Activated CD4-positive, alpha-beta T cell treated with anti-CD3 and anti-CD28 coated beads for 36 hours (primary cell): ENCODE measurements at regions of chrX and their contacts with region 1.

Region 1: GRCh38 chrX:47581731-47582647 is at the start of gene TIMP1:
- DNase-seq: peak; percentile 90
- ATAC-seq: peak; percentile 86
- H3K4me3 Mint-ChIP-seq: peak within 1 kb of the TSS; percentile 46
- H3K27ac Mint-ChIP-seq: peak within 1 kb of the TSS; percentile 81
- H3K4me1 Mint-ChIP-seq: peaks cover 50% of the 10 kb centered on the region
- H3K27me3 Mint-ChIP-seq: peaks cover 3% of the 10 kb centered on the region
- total RNA-seq, gene TIMP1: 40.3 to 48.4 TPM

Region 2: GRCh38 chrX:47169726-47170515 is 412.1 kb before region 1 on chrX:
- CTCF ChIA-PET with region 1: no interaction called
- POLR2A ChIA-PET with region 1: no interaction called
- intact Hi-C with region 1: no loop called
- DNase-seq: no peak
- ATAC-seq: no peak
- H3K4me3 Mint-ChIP-seq: no peak overlapping the region
- H3K27ac Mint-ChIP-seq: no peak overlapping the region
- H3K4me1 Mint-ChIP-seq: peaks cover 2% of the 10 kb centered on the region
- H3K27me3 Mint-ChIP-seq: no peaks in the 10 kb centered on the region

Region 3: DNA sequence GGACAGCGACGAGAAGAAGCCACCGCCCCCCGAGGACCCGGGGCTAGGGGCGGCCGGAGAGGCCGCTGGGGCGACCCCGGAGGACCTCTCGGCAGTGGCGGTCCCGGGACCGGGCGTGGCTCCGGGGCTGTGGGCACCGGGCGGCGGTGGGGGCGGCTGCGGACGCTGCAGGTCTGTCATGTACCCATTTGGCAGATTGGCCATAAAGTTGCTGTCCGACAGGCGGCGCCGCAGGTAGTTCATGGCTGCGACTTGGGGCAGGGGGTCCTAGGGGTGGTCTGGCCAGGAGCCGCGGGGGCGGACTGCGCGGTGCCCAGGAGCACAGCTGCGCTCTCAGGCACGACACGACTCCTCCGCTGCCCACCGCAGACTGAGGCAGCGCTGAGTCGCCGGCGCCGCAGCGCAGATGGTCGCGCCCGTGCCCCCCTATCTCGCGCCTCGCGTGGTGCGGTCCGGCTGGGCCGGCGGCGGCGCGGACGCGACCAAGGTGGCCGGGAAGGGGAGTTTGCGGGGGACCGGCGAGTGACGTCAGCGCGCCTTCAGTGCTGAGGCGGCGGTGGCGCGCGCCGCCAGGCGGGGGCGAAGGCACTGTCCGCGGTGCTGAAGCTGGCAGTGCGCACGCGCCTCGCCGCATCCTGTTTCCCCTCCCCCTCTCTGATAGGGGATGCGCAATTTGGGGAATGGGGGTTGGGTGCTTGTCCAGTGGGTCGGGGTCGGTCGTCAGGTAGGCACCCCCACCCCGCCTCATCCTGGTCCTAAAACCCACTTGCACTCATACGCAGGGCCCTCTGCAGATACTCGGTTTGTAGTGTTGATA is 37.7 kb after region 1 on chrX and contains the start of gene SYN1:
- CTCF ChIA-PET with region 1: no interaction called
- POLR2A ChIA-PET with region 1: no interaction called
- intact Hi-C with region 1: loop called in 1 of 2 experiments (anchors 5 kb)
- DNase-seq: peak; percentile 89
- ATAC-seq: peak; percentile 78
- H3K4me3 Mint-ChIP-seq: peak within 1 kb of the TSS; percentile 45
- H3K27ac Mint-ChIP-seq: no peak within 1 kb of the TSS
- H3K4me1 Mint-ChIP-seq: peaks cover 13% of the 10 kb centered on the region
- H3K27me3 Mint-ChIP-seq: no peaks in the 10 kb centered on the region
- total RNA-seq, gene SYN1: 0.82 to 0.98 TPM

Region 4: DNA sequence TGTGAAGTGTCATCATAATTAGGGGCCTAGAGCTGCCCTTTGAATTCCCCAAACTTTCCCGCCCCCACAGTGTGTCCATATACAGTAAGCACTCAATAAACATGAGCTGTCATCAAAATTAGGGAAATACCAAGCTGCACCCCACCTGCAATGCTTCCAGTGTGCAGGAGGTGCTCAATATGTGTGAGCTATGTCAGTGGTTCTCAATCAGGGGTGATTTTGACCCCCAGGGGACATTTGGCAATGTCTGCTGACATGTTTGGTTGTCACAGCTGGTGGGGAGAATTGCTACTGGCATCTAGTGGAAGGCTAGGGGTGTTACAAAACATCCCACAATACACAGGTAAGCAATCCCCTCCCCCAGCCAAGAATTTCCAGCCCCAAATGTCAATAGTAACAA is 47.0 kb after region 1 on chrX:
- CTCF ChIA-PET with region 1: no interaction called
- POLR2A ChIA-PET with region 1: no interaction called
- intact Hi-C with region 1: loop called (anchors 2 to 5 kb)
- DNase-seq: peak; percentile 35
- ATAC-seq: peak; percentile 33
- H3K4me3 Mint-ChIP-seq: peak overlapping the region; percentile 54
- H3K27ac Mint-ChIP-seq: peak overlapping the region; percentile 82
- H3K4me1 Mint-ChIP-seq: peaks cover 23% of the 10 kb centered on the region
- H3K27me3 Mint-ChIP-seq: no peaks in the 10 kb centered on the region

Region 5: DNA sequence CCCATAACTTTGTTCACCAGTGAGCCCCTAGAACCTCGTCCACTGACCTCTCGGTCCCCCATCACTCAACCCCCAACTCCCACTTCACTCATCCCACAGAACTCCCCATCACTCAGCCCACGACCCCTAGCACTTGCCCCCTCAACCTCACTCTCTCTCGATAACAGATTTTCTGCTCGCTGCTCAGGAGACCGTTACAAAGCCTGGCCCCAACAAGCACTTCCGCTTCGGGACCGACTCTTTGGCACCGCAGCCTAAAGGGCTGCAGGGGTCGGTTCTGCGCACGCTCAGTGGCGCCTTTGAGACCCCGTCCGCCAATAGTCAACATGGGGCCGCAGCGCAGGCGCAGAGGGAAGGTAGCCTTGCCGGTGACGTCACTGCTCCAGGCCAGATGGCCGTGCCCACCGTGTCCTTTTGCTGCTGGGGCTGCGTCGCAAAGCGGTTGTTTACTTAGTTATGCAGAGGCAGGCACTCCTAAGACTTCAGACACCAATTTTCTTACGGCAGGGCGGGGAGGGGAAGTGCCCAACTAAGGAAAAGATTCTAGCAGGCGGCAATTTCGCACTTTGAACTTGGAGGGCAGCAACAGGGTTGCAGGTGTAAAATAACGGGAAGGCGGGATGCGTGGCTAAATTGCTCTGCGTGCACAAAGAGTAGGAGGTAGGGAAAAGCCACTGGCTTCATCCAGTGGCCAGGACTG is 421.9 kb after region 1 on chrX and contains the start of gene ZNF182:
- CTCF ChIA-PET with region 1: no interaction called
- POLR2A ChIA-PET with region 1: no interaction called
- intact Hi-C with region 1: loop called in 1 of 2 experiments (anchors 5 kb)
- DNase-seq: peak; percentile 94
- ATAC-seq: peak; percentile 95
- H3K4me3 Mint-ChIP-seq: peak within 1 kb of the TSS; percentile 97
- H3K27ac Mint-ChIP-seq: peak within 1 kb of the TSS; percentile 100
- H3K4me1 Mint-ChIP-seq: peaks cover 25% of the 10 kb centered on the region
- H3K27me3 Mint-ChIP-seq: no peaks in the 10 kb centered on the region
- total RNA-seq, gene ZNF182: 8.0 to 9.3 TPM